Kidney (tissue), 22 donors: ENCODE measurements at regions of chr1 and their contacts with region 1.

Region 1: DNA sequence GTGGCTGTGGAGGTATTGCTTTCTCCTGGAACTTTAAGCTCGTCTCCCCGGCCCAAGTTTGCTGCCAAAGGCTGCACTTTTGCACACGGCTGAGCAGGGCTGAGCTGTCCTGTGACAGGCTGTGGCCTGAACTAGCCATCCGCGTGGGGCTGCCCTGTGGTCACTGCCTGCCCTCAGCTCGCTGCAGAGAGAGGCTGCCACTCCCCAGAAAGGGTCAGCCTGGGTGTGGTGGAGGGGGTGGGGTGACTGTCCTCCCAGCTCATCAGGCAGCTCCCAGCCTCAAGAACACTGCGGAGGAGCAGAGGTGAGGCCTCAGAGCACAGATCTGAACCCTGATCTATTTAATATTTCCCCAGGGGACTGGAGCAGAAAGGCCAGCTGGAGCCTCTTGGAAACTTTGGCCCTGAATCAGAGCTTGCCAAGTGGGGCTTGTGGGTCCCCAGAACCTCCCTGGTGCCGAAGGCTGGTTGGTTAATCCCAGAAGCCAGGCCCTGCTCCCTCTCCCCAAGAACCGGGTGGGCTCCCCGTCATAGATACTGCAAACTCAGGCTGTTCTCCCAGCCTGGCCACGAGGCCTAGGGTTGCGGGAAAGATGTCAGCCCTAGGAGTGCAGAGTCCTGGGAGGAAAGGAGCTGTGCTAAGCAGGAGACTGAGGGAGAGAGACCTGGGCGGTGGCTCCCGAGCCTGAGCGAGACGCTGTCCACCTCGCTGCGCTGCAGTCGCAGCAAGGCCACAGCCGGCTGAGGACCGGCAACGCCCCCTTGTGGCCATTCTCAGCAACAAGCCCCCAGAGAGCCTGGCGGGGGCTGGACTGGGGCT is 125.1 kb upstream of the IPO9 start:
- DNase-seq: peak; percentile 87 to 94 (median 90)
- H3K4me3 ChIP-seq: no peak overlapping the region
- H3K27ac ChIP-seq: peak overlapping the region in 1 of 2 donors; percentile 55
- H3K4me1 ChIP-seq: peaks cover 0 to 12% (median 7%) of the 10 kb centered on the region in 3 donors
- H3K27me3 ChIP-seq: no peaks in the 10 kb centered on the region
- CTCF ChIP-seq: peak; percentile 97

Region 2: GRCh38 chr1:200226268-200226968 is 1477.4 kb before region 1 on chr1:
- intact Hi-C with region 1: no loop called
- DNase-seq: no peak
- H3K4me3 ChIP-seq: no peak overlapping the region
- H3K27ac ChIP-seq: no peak overlapping the region
- H3K4me1 ChIP-seq: no peaks in the 10 kb centered on the region
- H3K27me3 ChIP-seq: no peaks in the 10 kb centered on the region
- CTCF ChIP-seq: no peak

Region 3: GRCh38 chr1:201559679-201560162 is 144.1 kb before region 1 on chr1:
- intact Hi-C with region 1: loop called (anchors 5 kb)
- DNase-seq: peak; percentile 77 to 91 (median 85)
- H3K4me3 ChIP-seq: no peak overlapping the region
- H3K27ac ChIP-seq: no peak overlapping the region
- H3K4me1 ChIP-seq: peaks cover 0 to 2% (median 0%) of the 10 kb centered on the region in 3 donors
- H3K27me3 ChIP-seq: no peaks in the 10 kb centered on the region
- CTCF ChIP-seq: peak; percentile 99